HAP-1 (cell line): ENCODE measurements at regions of chr2 and their contacts with region 1.

Region 1: GRCh38 chr2:85291425-85292023 is 36.3 kb downstream of the TGOLN2 start:
- DNase-seq: no peak
- H3K4me3 ChIP-seq: no peak overlapping the region
- H3K4me1 ChIP-seq: peaks cover 22% of the 10 kb centered on the region
- H3K27me3 ChIP-seq: no peaks in the 10 kb centered on the region

Region 2: DNA sequence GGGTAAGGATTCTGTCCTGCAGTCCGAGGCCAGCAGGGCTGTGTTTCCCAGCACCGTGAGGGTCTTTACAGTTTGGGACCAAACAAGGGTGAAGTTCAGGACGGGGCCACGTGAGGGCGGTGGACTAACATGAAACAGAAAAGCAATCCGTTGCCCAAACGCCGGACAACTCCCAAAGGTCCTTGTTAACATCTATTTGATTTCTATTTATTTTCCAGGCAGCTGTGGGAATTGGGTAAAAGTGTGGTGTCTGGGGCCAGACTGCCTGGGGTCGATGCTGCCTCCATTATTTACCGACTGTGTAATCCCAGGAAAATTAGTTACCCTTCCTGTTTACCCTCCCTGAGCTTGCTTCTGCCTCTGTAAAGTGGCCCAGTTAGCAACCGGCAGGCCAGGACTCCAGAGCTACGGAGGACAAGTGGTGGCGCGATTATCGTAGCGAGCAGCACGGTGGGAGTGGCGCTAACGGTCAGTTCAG is 224.6 kb before region 1 on chr2:
- in situ Hi-C with region 1: loop called (anchors 5 kb)
- DNase-seq: peak; percentile 76 to 94
- H3K4me3 ChIP-seq: peak overlapping the region; percentile 7; the same call in 1 of the 2 replicates
- H3K4me1 ChIP-seq: peaks cover 3% of the 10 kb centered on the region
- H3K27me3 ChIP-seq: no peaks in the 10 kb centered on the region

Region 3: DNA sequence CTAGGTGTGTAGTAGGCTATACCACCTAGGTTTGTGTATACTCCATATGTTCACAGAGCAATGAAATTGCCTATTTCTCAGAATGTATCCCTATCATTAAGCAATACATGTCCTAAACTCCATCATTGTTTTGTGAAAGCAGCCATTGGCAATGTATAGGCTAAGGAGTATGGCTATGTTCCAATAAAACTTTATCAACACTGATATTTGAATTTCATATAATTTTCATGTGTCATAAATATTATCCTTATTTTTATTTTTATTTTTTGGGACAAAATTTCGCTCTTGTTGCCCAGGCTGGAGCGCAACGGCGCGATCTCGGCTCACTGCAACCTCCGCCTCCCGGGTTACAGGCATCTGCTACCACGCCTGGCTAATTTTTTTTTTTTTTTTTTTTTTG is 162.6 kb before region 1 on chr2:
- in situ Hi-C with region 1: loop called (anchors 5 kb)
- DNase-seq: no peak
- H3K4me3 ChIP-seq: no peak overlapping the region
- H3K4me1 ChIP-seq: peaks cover 7% of the 10 kb centered on the region
- H3K27me3 ChIP-seq: no peaks in the 10 kb centered on the region

Region 4: GRCh38 chr2:85804583-85804982 is 513.1 kb after region 1 on chr2:
- in situ Hi-C with region 1: no loop called
- DNase-seq: peak in 1 of 2 experiments; percentile 51
- H3K4me3 ChIP-seq: no peak overlapping the region
- H3K4me1 ChIP-seq: no peaks in the 10 kb centered on the region
- H3K27me3 ChIP-seq: no peaks in the 10 kb centered on the region; the same call in 1 of the 2 replicates

Region 5: DNA sequence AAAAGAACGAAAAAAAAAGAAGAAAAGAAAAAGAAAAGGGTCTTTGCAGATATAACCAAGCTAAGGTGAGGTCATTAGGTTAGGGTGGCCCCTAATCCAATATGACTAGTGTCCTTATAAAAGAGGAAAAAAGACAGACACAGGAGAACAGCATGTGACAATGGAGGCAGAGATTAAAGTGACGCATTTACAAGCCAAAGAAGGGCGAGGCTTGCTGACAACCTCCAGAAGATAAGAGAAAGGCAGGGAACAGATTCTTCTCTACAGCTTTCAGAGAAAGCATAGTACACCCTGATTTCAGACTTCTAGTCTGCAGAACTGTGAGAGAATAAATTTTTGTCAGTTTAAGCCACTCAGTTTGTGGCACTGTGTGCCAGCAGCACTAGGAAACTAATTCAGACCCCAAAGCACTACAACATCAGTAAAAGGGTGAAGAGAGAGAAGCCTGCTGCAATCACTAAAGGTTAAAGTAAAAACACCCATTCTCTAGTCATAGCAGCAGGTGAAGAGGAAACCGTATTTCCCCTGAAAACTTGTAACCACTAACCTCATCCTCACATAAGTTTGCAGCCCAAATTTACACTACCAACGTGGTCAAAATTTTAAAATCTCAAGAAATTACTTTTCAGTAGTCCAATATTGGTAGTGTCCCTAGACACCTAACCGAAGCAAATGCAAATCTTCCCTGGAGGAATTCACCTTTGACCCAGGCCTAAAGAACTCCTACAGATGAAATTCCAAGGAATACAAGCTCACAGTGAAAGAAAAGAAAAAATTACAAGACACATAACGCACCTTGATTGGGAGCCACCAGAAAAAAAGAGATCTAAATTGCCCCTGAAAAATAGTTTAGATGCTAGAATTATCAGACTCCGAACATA is 1028.4 kb after region 1 on chr2:
- in situ Hi-C with region 1: no loop called
- DNase-seq: peak; percentile 3 to 75
- H3K4me3 ChIP-seq: no peak overlapping the region
- H3K4me1 ChIP-seq: peaks cover 28% of the 10 kb centered on the region
- H3K27me3 ChIP-seq: no peaks in the 10 kb centered on the region